ENCODE measurements at regions of chr13 and their contacts with region 1.

Region 1: GRCh38 chr13:35855531-35856019 is 275.6 kb downstream of the DCLK1 start:
- DNase-seq: peak; percentile 30 to 85
- H3K4me3 ChIP-seq: no peak overlapping the region
- CTCF ChIP-seq: no peak
- POLR2A ChIP-seq: no peak

Region 2: DNA sequence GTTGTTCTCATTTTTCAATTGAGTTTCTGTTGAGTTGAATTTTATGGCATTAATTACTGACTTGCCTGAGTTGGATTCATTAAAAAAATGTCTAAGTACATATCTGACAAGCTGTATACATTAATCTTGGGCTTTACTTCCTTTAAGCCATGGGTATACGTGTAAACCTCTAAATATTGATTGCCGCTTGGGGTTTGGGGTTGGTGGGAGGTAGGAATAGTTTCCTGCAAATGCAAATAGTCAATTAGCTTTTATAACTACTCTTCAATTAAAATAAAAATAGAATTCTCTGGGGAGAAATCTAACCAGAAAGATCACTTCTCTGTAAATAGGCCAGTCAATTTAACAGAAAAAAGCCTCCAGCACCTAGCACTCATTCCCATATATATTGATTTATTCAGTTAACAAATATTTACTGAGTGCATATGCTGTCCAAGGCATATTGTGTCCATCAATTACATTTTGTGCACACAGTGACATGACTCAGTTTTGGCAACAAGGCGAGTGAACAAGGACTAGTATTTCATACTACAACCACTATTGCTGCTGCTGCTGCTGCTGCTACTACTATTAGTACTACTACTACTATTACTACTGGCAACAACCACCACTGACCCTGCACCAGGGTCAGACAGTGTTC is 1730.8 kb before region 1 on chr13:
- intact Hi-C with region 1: loop called (anchors 5 kb)
- DNase-seq: no peak
- H3K4me3 ChIP-seq: no peak overlapping the region
- CTCF ChIP-seq: no peak
- POLR2A ChIP-seq: no peak